GM10248 (cell line): ENCODE measurements at regions of chr2 and their contacts with region 1.

Region 1: GRCh38 chr2:113138428-113139322 is 11.3 kb downstream of the IL1RN start:
- DNase-seq: peak; percentile 74
- CTCF ChIP-seq: peak; percentile 64

Region 2: DNA sequence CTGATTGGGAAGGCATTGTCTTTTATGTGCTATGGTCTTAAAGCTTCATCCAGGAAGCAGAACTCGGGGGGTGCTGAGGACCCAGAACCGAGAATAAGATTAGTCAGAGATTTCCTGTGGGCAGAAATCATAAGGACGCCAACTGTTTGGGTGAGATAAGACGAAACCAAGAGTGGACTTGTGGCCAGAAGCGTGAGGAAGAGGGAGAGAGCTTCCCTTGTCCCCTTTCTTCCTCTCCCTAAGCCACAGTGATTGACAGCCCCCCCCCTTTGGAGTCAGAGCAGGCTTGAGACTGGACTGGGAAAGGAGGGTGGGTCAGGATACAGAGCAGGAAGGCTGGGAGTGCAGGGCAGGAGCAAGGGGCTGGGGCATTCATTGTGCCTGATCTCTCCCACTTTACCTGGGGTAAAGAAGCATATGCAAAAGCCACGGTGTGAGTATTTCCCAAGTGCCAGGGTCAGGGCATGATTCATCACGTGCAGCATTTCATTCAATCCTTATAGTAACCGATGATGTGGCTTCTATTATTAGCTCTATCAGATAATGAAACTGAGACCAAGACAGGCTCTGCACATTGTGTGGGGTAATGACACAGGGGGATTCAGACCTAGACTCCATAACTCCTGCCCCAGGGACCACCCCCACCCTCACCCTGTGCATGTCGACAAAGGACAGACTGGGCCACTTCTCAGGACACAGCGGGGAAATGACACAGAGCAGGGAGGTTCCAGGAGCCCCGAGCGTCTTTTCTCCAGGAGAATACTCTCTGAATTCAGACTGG is 14.3 kb before region 1 on chr2:
- CTCF ChIA-PET with region 1: interaction called, 112 read pairs
- POLR2A ChIA-PET with region 1: no interaction called
- DNase-seq: no peak
- CTCF ChIP-seq: no peak

Region 3: GRCh38 chr2:113167115-113167932 is 28.6 kb after region 1 on chr2:
- CTCF ChIA-PET with region 1: interaction called, 133 read pairs
- POLR2A ChIA-PET with region 1: no interaction called
- DNase-seq: no peak
- CTCF ChIP-seq: no peak

Region 4: GRCh38 chr2:113192438-113193100 is 53.9 kb after region 1 on chr2:
- CTCF ChIA-PET with region 1: interaction called, 28 read pairs
- POLR2A ChIA-PET with region 1: no interaction called
- DNase-seq: no peak
- CTCF ChIP-seq: peak; percentile 7

Region 5: GRCh38 chr2:113248997-113249770 is 110.5 kb after region 1 on chr2:
- CTCF ChIA-PET with region 1: interaction called, 29 read pairs
- POLR2A ChIA-PET with region 1: no interaction called
- DNase-seq: peak; percentile 85
- CTCF ChIP-seq: peak; percentile 88

Region 6: DNA sequence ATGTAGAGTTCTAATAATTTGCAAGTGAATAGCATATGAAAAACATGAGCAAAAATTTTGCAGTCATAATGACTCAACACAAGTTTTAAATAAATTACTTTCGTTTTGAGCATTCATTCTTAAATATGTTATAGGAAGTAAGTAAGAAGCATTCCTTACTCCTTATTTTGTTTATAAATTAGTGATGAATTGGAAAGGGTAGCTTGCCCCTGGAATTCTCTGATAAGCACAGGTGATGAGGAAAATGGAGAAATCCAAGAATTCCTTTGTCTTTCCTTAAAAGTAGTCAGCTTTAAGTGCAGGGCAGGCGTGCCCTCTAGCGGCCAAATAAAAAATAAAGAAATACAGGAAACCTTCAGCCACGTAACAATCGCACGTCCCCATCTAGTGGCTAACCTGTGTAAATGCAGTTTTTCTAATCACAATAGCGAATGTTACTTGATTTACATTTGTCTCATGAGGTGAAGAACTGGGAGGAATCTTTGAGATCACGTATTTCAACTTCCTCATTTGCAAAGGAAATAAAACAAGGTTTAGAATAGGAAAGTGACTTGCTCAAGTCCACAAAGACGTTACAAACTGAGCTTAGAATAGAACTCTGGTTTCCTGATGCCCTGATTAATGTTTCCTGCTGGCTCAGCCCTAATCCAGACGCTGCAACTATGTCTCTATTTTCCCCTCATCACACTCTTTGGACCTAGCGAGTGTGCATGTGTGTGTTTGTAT is 251.6 kb after region 1 on chr2:
- CTCF ChIA-PET with region 1: interaction called, 89 read pairs
- POLR2A ChIA-PET with region 1: no interaction called
- DNase-seq: peak; percentile 69
- CTCF ChIP-seq: peak; percentile 96